Activated CD4-positive, alpha-beta T cell treated with anti-CD3 and anti-CD28 coated beads for 36 hours (primary cell): ENCODE measurements at regions of chr3 and their contacts with region 1.

Region 1: GRCh38 chr3:10361375-10361774 is 40.5 kb upstream of the SEC13 start:
- DNase-seq: no peak
- ATAC-seq: no peak
- H3K4me3 Mint-ChIP-seq: no peak overlapping the region
- H3K27ac Mint-ChIP-seq: no peak overlapping the region
- H3K4me1 Mint-ChIP-seq: peaks cover 36% of the 10 kb centered on the region
- H3K27me3 Mint-ChIP-seq: peaks cover 12% of the 10 kb centered on the region

Region 2: DNA sequence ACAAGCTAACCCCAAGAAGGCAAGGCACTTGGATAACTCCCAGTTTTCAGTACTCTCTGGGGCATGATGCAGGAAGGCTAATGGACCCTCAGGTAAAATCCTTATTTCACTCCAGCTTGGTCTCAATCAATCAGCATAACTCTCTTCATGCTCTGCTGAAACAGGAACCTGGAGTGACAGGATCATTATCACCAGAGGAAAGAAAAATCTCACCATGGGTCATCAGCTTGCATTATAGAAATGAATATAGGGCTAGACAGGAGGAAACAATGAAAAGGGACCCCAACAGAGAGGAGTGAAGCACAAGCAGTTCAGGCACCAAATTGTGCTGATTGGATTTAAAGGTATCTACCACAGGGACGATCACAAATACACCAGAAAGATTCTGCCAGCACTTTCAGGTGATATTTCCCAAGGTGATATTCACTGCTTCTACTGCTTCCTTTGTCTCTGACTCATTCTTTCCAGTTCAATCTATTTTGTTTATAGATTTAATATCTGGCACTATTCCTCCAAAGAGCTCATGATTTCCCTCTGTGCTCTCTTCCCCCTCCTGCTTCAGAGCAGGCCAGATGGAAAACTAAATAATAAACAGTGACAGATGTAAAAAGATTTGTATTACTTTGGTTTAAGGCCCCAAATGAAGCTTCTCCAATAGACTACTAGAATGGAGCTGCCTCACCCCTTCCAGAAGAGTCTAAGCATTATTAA is 1021.5 kb before region 1 on chr3:
- CTCF ChIA-PET with region 1: no interaction called
- POLR2A ChIA-PET with region 1: no interaction called
- intact Hi-C with region 1: no loop called
- DNase-seq: no peak
- ATAC-seq: no peak
- H3K4me3 Mint-ChIP-seq: no peak overlapping the region
- H3K27ac Mint-ChIP-seq: no peak overlapping the region
- H3K4me1 Mint-ChIP-seq: no peaks in the 10 kb centered on the region
- H3K27me3 Mint-ChIP-seq: no peaks in the 10 kb centered on the region

Region 3: GRCh38 chr3:10387881-10388609 is 26.7 kb after region 1 on chr3:
- CTCF ChIA-PET with region 1: no interaction called
- POLR2A ChIA-PET with region 1: no interaction called
- intact Hi-C with region 1: no loop called
- DNase-seq: no peak
- ATAC-seq: no peak
- H3K4me3 Mint-ChIP-seq: no peak overlapping the region
- H3K27ac Mint-ChIP-seq: no peak overlapping the region
- H3K4me1 Mint-ChIP-seq: peaks cover 24% of the 10 kb centered on the region
- H3K27me3 Mint-ChIP-seq: no peaks in the 10 kb centered on the region

Region 4: GRCh38 chr3:10542518-10542917 is 181.1 kb after region 1 on chr3:
- CTCF ChIA-PET with region 1: no interaction called
- POLR2A ChIA-PET with region 1: no interaction called
- intact Hi-C with region 1: no loop called
- DNase-seq: no peak
- ATAC-seq: no peak
- H3K4me3 Mint-ChIP-seq: no peak overlapping the region
- H3K27ac Mint-ChIP-seq: no peak overlapping the region
- H3K4me1 Mint-ChIP-seq: no peaks in the 10 kb centered on the region
- H3K27me3 Mint-ChIP-seq: peaks cover 20% of the 10 kb centered on the region

Region 5: GRCh38 chr3:10602769-10603768 is 241.7 kb after region 1 on chr3:
- CTCF ChIA-PET with region 1: no interaction called
- POLR2A ChIA-PET with region 1: no interaction called
- intact Hi-C with region 1: loop called in 1 of 2 experiments (anchors 5 kb)
- DNase-seq: peak; percentile 83
- ATAC-seq: peak; percentile 96
- H3K4me3 Mint-ChIP-seq: no peak overlapping the region
- H3K27ac Mint-ChIP-seq: peak overlapping the region; percentile 17
- H3K4me1 Mint-ChIP-seq: peaks cover 30% of the 10 kb centered on the region
- H3K27me3 Mint-ChIP-seq: peaks cover 23% of the 10 kb centered on the region